Right ventricle myocardium inferior (tissue), 1 donor: ENCODE measurements at regions of chr4 and their contacts with region 1.

Region 1: DNA sequence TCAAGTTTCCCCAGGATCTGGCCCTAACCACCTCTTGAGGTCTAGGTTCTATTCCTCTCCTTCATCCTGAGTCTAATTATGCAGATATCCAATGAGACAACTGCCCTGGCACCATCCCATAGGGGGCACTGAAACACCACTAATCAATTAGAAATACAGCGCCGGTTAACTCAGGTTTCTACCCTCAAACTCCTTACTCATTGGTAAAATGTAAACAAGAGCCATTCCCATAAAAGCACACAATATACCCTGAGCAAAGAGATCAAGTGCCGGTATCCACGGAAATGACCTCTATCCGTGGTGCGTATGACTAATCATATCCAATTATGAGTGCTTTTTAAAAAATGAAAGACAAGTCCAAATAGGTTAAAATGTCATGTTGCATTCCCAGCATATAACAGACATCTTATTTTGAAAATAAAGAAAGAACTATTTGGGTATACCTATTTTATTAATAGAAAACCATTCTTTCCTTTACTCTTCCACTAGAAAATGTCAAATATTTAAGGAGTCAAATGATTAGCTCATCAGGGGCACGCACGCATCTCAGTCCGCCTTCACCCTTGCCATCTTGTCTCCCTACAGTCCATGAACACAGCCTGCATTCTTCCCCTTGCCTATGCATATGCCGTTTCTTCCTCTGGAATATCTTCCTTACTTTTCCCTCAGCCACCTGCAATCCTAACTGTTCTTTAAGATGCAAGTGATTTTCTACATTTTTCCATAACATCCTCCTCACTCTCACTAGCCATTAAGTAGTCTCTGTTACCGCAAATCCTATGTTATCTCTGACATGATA is 141.1 kb downstream of the MAML3 start:
- DNase-seq: no peak
- ATAC-seq: peak; percentile 87

Region 2: GRCh38 chr4:140326395-140326993 is 313.6 kb after region 1 on chr4:
- intact Hi-C with region 1: loop called (anchors 5 kb)
- DNase-seq: no peak
- ATAC-seq: peak; percentile 67